Activated CD4-positive, alpha-beta T cell treated with anti-CD3 and anti-CD28 coated beads for 36 hours (primary cell): ENCODE measurements at regions of chr6 and their contacts with region 1.

Region 1: GRCh38 chr6:127420556-127420955 is 38.6 kb downstream of the KIAA0408 start:
- DNase-seq: peak; percentile 89
- ATAC-seq: peak; percentile 99
- H3K4me3 Mint-ChIP-seq: peak overlapping the region; percentile 28
- H3K27ac Mint-ChIP-seq: peak overlapping the region; percentile 75
- H3K4me1 Mint-ChIP-seq: peaks cover 23% of the 10 kb centered on the region
- H3K27me3 Mint-ChIP-seq: no peaks in the 10 kb centered on the region

Region 2: GRCh38 chr6:127291495-127291894 is 129.1 kb before region 1 on chr6:
- CTCF ChIA-PET with region 1: interaction called, 4 read pairs
- POLR2A ChIA-PET with region 1: interaction called, 3 read pairs
- intact Hi-C with region 1: loop called (anchors 2 kb)
- DNase-seq: no peak
- ATAC-seq: peak; percentile 71
- H3K4me3 Mint-ChIP-seq: peak overlapping the region; percentile 11
- H3K27ac Mint-ChIP-seq: no peak overlapping the region
- H3K4me1 Mint-ChIP-seq: peaks cover 45% of the 10 kb centered on the region
- H3K27me3 Mint-ChIP-seq: no peaks in the 10 kb centered on the region

Region 3: GRCh38 chr6:127342946-127343808 is 77.4 kb before region 1 on chr6 and contains the start of gene ECHDC1:
- CTCF ChIA-PET with region 1: no interaction called
- POLR2A ChIA-PET with region 1: no interaction called
- intact Hi-C with region 1: loop called (anchors 1 to 2 kb)
- DNase-seq: peak; percentile 85
- ATAC-seq: peak; percentile 85
- H3K4me3 Mint-ChIP-seq: no peak within 1 kb of the TSS
- H3K27ac Mint-ChIP-seq: no peak within 1 kb of the TSS
- H3K4me1 Mint-ChIP-seq: peaks cover 19% of the 10 kb centered on the region
- H3K27me3 Mint-ChIP-seq: no peaks in the 10 kb centered on the region
- total RNA-seq, gene ECHDC1: 31.1 to 48.2 TPM

Region 4: GRCh38 chr6:127484212-127484858 is 63.8 kb after region 1 on chr6:
- CTCF ChIA-PET with region 1: interaction called, 4 read pairs
- POLR2A ChIA-PET with region 1: no interaction called
- intact Hi-C with region 1: loop called (anchors 1 kb)
- DNase-seq: no peak
- ATAC-seq: peak; percentile 93
- H3K4me3 Mint-ChIP-seq: peak overlapping the region; percentile 55
- H3K27ac Mint-ChIP-seq: peak overlapping the region; percentile 5
- H3K4me1 Mint-ChIP-seq: peaks cover 26% of the 10 kb centered on the region
- H3K27me3 Mint-ChIP-seq: peaks cover 20% of the 10 kb centered on the region

Region 5: DNA sequence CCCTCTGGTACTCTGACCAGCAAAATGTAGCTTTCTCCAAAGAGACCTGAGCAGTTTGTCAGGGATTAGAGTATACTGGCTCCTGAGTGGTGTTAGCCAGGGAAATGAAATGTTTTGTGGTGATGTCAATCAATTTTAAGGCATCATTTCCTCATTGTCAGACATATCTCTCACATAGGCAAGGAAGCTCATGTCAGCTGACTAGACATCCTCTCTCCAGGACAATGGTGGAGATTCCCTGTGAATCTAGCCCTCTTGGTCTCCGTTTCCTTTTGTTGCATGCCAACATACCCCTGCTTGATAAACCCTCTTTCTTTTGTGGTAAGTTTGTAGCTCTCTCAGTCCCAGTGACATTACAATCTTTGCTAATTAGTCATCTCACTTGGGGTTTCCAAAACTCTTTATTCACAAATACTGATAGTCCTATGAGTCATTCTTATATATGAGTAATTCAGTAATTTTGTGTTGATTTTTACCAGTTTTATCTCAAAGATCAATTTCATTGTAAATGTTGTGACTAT is 1235.5 kb after region 1 on chr6:
- CTCF ChIA-PET with region 1: no interaction called
- POLR2A ChIA-PET with region 1: no interaction called
- intact Hi-C with region 1: loop called in 1 of 2 experiments (anchors 10 kb)
- DNase-seq: peak; percentile 27
- ATAC-seq: peak; percentile 96
- H3K4me3 Mint-ChIP-seq: peak overlapping the region; percentile 12
- H3K27ac Mint-ChIP-seq: peak overlapping the region; percentile 89
- H3K4me1 Mint-ChIP-seq: peaks cover 38% of the 10 kb centered on the region
- H3K27me3 Mint-ChIP-seq: peaks cover 10% of the 10 kb centered on the region